PC-3 (cell line): ENCODE measurements at regions of chr4 and their contacts with region 1.

Region 1: GRCh38 chr4:69881173-69881773 is 21.3 kb upstream of the SULT1E1 start:
- DNase-seq: peak; percentile 66
- ATAC-seq: peak; percentile 78
- H3K4me3 ChIP-seq: no peak overlapping the region
- H3K27ac ChIP-seq: no peak overlapping the region
- H3K4me1 ChIP-seq: no peaks in the 10 kb centered on the region
- H3K27me3 ChIP-seq: no peaks in the 10 kb centered on the region
- CTCF ChIP-seq: peak; percentile 82

Region 2: GRCh38 chr4:69823481-69824186 is 57.6 kb before region 1 on chr4:
- CTCF ChIA-PET with region 1: no interaction called
- POLR2A ChIA-PET with region 1: no interaction called
- intact Hi-C with region 1: loop called (anchors 1 kb)
- DNase-seq: peak; percentile 78
- ATAC-seq: peak; percentile 88
- H3K4me3 ChIP-seq: no peak overlapping the region
- H3K27ac ChIP-seq: peak overlapping the region; percentile 9; the same call in 1 of the 2 replicates
- H3K4me1 ChIP-seq: peaks cover 7% of the 10 kb centered on the region
- H3K27me3 ChIP-seq: no peaks in the 10 kb centered on the region
- CTCF ChIP-seq: peak; percentile 84

Region 3: DNA sequence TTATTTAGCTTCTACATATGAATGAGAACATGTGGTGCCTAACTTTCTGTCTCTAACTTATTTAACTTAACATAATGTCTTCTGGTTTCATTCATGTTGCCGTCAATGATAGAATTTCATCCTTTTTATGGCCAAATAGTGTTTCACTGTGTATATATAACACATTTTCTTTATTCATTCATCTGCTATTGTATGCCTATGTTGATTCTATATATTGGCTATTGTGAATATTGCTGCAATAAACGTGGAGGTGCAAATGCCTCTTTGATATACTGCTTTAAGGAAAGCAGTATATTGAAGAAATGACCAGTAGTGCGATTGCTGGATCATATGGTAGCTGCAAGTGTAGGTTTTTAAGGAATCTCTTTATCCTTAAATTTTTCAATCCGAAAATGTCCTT is 39.6 kb after region 1 on chr4:
- CTCF ChIA-PET with region 1: no interaction called
- POLR2A ChIA-PET with region 1: no interaction called
- intact Hi-C with region 1: no loop called
- DNase-seq: no peak
- ATAC-seq: no peak
- H3K4me3 ChIP-seq: no peak overlapping the region
- H3K27ac ChIP-seq: no peak overlapping the region
- H3K4me1 ChIP-seq: no peaks in the 10 kb centered on the region
- H3K27me3 ChIP-seq: peaks cover 12% of the 10 kb centered on the region; the same call in 1 of the 2 replicates
- CTCF ChIP-seq: no peak

Region 4: GRCh38 chr4:70225824-70226223 is 344.6 kb after region 1 on chr4 and contains the start of gene FDCSP:
- CTCF ChIA-PET with region 1: no interaction called
- POLR2A ChIA-PET with region 1: no interaction called
- intact Hi-C with region 1: no loop called
- DNase-seq: no peak
- ATAC-seq: no peak
- H3K4me3 ChIP-seq: no peak within 1 kb of the TSS
- H3K27ac ChIP-seq: no peak within 1 kb of the TSS
- H3K4me1 ChIP-seq: no peaks in the 10 kb centered on the region
- H3K27me3 ChIP-seq: peaks cover 29% of the 10 kb centered on the region
- CTCF ChIP-seq: no peak
- total RNA-seq, gene FDCSP: not detected in 2 replicates